ENCODE measurements at regions of chr18 and their contacts with region 1.

Region 1: GRCh38 chr18:51051105-51051712 is 21.2 kb downstream of the SMAD4 start:
- DNase-seq: no peak
- ATAC-seq: peak; percentile 87
- H3K4me3 Mint-ChIP-seq: no peak overlapping the region
- H3K27ac Mint-ChIP-seq: peak overlapping the region; percentile 73; the same call in 1 of the 2 replicates
- H3K4me1 Mint-ChIP-seq: peaks cover 40% of the 10 kb centered on the region
- H3K27me3 Mint-ChIP-seq: no peaks in the 10 kb centered on the region
- CTCF ChIP-seq: peak; percentile 67

Region 2: GRCh38 chr18:50918153-50918552 is 133.1 kb before region 1 on chr18:
- CTCF ChIA-PET with region 1: no interaction called
- POLR2A ChIA-PET with region 1: interaction called, 10 read pairs
- DNase-seq: no peak
- ATAC-seq: no peak
- H3K4me3 Mint-ChIP-seq: no peak overlapping the region
- H3K27ac Mint-ChIP-seq: 0 out of 2 replicates have a peak overlapping the region, but pooled peaks have one; percentile 18
- H3K4me1 Mint-ChIP-seq: no peaks in the 10 kb centered on the region
- H3K27me3 Mint-ChIP-seq: no peaks in the 10 kb centered on the region
- CTCF ChIP-seq: no peak

Region 3: DNA sequence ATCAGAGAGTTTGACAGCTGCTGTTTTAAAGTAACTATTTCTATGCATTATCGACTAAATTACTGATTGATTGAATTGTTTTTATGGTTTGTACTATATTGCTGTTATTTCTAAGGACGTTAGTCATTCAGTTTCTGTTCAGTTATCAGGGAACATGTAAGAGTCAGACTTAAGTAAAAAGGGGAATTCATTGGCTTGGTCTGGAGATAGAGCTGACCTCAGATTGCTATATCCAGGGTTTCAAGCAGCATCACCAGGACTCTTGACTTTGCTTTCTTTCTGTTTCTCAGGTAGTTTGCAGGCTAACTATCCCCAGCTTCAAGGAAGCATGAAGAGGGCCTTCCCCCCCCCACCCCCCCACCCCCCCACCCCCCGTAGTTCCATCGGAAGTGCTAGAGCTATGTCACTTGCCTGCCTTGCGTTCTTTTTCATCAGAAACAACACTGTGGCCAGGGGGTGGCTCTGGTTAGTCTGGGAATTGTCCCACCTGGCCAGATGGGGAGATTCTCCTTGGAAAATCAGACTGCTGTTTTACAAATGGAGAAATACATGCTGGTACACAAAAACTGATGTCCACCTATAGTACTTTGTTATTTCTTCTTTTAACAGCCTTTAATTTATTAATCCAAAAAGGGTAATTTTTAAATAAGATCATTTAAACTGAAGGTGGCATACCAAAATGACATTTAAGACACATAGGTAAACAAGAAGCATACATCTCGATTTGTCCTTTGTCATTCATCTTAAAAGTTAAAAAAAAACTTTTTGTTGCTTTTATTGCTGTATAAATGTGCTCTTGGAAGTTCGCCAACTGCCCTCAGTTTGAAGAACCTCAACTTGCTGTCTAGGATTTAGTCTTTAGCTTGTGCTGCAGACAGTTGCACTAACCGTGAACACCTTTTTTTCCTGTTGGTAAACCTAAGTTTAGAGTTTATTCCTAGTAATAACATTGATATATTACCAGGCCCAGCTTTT is 11.8 kb before region 1 on chr18:
- CTCF ChIA-PET with region 1: interaction called, 11 read pairs
- POLR2A ChIA-PET with region 1: no interaction called
- DNase-seq: peak; percentile 30
- ATAC-seq: peak; percentile 75
- H3K4me3 Mint-ChIP-seq: no peak overlapping the region
- H3K27ac Mint-ChIP-seq: peak overlapping the region; percentile 91
- H3K4me1 Mint-ChIP-seq: peaks cover 81% of the 10 kb centered on the region
- H3K27me3 Mint-ChIP-seq: no peaks in the 10 kb centered on the region
- CTCF ChIP-seq: no peak

Region 4: DNA sequence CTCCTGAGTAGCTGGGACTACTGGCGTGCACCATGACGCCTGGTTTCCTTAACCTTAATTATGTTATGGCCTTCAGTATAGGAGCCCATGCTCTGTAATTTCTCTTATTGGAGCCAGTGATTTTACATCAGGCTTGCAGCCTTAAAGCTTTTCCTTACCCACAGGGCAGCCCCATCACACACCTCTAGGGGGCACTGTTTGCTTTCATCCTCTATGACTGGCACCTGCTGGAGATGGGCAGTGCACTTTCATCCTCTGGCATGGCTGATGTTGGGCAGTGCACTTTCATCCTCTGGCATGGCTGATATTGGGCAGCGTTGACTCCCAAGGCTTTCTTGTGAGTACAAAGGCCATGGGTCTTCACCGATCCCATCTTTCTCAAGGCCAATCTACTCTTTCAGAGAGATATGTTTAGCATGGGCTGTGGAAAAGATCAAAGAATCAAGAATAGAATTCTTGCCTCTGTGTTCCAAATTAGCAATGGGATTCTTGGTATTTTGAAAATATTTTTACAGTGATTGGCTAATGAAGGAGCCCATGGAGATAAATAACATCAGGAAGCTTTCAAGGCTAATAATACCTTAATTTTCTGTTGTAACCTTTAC is 226.9 kb after region 1 on chr18:
- CTCF ChIA-PET with region 1: no interaction called
- POLR2A ChIA-PET with region 1: no interaction called
- DNase-seq: peak; percentile 83
- ATAC-seq: peak; percentile 82
- H3K4me3 Mint-ChIP-seq: no peak overlapping the region
- H3K27ac Mint-ChIP-seq: no peak overlapping the region
- H3K4me1 Mint-ChIP-seq: peaks cover 40% of the 10 kb centered on the region
- H3K27me3 Mint-ChIP-seq: no peaks in the 10 kb centered on the region
- CTCF ChIP-seq: peak; percentile 68

Region 5: GRCh38 chr18:51361130-51361860 is 310.1 kb after region 1 on chr18:
- CTCF ChIA-PET with region 1: no interaction called
- POLR2A ChIA-PET with region 1: no interaction called
- DNase-seq: no peak
- ATAC-seq: no peak
- H3K4me3 Mint-ChIP-seq: no peak overlapping the region
- H3K27ac Mint-ChIP-seq: no peak overlapping the region
- H3K4me1 Mint-ChIP-seq: peaks cover 26% of the 10 kb centered on the region
- H3K27me3 Mint-ChIP-seq: no peaks in the 10 kb centered on the region
- CTCF ChIP-seq: no peak

Measured in WTC11 (cell line).